Activated T-helper 2 cell treated with anti-CD3 and anti-CD28 coated beads, Interferon-gamma antibody, Interleukin-2, Interleukin-4, amounts not matched to agents 10 μg/mL and 5 μg/mL and 100 μg/mL, durations not matched to agents 14 hours and 24 hours and 36 hours (primary cell): ENCODE measurements at regions of chr3 and their contacts with region 1.

Region 1: GRCh38 chr3:133927540-133928066 is 31.9 kb upstream of the RAB6B start:
- DNase-seq: peak; percentile 54
- H3K4me3 Mint-ChIP-seq: peak overlapping the region; percentile 62
- H3K27ac Mint-ChIP-seq: no peak overlapping the region
- H3K4me1 Mint-ChIP-seq: peaks cover 9% of the 10 kb centered on the region
- H3K27me3 Mint-ChIP-seq: peaks cover 29% of the 10 kb centered on the region

Region 2: DNA sequence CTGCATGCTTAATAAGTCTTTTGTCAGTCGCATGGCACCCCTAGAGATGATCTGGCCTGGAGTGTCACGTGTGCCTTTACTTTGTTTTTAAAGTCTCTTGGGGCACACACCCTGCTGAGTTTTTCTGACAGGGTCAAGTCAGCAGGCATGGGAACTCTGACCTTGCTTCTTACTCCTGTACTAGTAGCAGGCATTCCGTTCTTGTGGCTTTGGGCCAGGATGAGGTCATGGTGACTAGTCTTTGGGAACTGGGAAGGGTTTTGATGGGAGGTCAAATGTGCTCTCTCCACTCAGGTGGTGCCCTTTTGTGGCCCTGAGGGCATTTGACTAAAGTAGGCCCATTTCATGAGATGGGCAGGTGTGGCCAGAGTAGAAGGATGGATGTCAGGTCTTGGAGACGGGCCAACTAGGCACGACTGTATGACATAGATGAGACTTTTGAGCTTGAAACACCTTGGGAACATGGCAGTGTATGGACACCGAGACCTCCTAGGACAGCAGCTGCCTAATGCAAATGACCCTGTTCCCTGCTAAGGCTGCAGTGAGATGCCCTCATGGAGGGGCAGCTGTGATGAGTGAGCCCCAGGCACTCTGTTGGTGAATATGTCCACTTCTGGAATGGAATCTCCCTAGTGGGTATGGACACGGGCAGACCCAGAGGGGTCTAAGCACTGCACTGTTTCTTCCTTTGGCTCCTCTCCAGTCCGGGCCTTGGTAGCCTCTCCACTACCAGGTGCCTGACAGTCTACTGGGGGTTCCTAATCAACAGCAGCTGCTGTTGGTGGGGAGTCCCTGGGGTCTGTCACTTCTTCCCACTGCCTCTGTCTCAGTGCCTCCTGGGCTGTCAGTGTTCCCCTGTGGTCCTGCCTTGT is 105.6 kb before region 1 on chr3:
- intact Hi-C with region 1: loop called (anchors 1 kb)
- DNase-seq: no peak
- H3K4me3 Mint-ChIP-seq: no peak overlapping the region
- H3K27ac Mint-ChIP-seq: no peak overlapping the region
- H3K4me1 Mint-ChIP-seq: peaks cover 3% of the 10 kb centered on the region
- H3K27me3 Mint-ChIP-seq: no peaks in the 10 kb centered on the region

Region 3: GRCh38 chr3:133991637-133992036 is 64.0 kb after region 1 on chr3:
- intact Hi-C with region 1: no loop called
- DNase-seq: no peak
- H3K4me3 Mint-ChIP-seq: no peak overlapping the region
- H3K27ac Mint-ChIP-seq: no peak overlapping the region
- H3K4me1 Mint-ChIP-seq: no peaks in the 10 kb centered on the region
- H3K27me3 Mint-ChIP-seq: peaks cover 12% of the 10 kb centered on the region